Psoas muscle (tissue), 8 donors: ENCODE measurements at regions of chr3 and their contacts with region 1.

Region 1: DNA sequence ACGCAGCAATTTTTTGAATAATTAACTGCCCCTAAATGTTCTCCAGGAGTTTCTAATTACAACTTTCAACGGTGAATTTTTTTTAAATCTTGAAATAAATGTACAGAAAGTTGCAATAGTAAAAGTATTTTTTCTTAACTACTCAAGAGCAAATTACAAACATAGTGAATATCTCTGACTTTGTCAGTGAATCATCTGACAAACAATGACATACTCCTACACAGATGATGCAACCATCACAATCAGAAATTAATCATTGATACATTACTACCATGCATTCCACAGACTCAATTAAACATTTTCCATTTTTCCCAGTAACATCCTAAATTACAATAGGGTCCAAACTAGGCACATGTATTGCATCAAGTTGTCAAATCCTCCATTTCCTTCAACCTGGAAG is 597.3 kb downstream of the NAALADL2 start:
- DNase-seq: no peak
- ATAC-seq: no peak
- H3K4me3 ChIP-seq: no peak overlapping the region
- H3K27ac ChIP-seq: no peak overlapping the region
- H3K4me1 ChIP-seq: no peaks in the 10 kb centered on the region
- H3K27me3 ChIP-seq: no peaks in the 10 kb centered on the region
- CTCF ChIP-seq: no peak

Region 2: GRCh38 chr3:175316799-175317198 is 139.7 kb before region 1 on chr3:
- intact Hi-C with region 1: no loop called
- DNase-seq: no peak
- ATAC-seq: no peak
- H3K4me3 ChIP-seq: no peak overlapping the region
- H3K27ac ChIP-seq: no peak overlapping the region
- H3K4me1 ChIP-seq: no peaks in the 10 kb centered on the region
- H3K27me3 ChIP-seq: no peaks in the 10 kb centered on the region
- CTCF ChIP-seq: no peak

Region 3: DNA sequence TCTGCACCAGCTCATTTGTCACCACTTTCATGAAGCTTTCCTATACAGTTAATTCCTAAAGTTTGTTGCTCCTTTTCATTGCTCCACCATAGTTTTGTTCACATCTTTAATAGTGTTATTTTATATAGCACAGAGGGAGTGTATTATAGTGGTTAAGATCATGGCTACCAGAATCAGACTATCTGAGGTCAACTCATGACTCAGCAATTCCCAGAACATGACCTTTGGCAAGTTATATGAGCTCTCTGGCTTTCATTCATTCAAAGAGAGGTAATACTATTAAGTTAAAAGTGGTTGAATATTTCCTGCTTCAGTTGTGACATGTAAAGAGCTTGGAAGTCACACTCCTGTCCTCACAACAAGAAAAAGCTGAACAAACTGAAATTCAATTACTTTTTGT is 476.1 kb after region 1 on chr3:
- intact Hi-C with region 1: loop called in 1 of 2 experiments (anchors 5 kb)
- DNase-seq: no peak
- ATAC-seq: no peak
- H3K4me3 ChIP-seq: no peak overlapping the region
- H3K27ac ChIP-seq: no peak overlapping the region
- H3K4me1 ChIP-seq: no peaks in the 10 kb centered on the region
- H3K27me3 ChIP-seq: no peaks in the 10 kb centered on the region
- CTCF ChIP-seq: no peak